ENCODE measurements at regions of chr13 and their contacts with region 1.

Region 1: GRCh38 chr13:48319531-48320398 is 16.2 kb downstream of the RB1 start:
- DNase-seq: no peak
- ATAC-seq: no peak
- H3K4me3 ChIP-seq: no peak overlapping the region
- H3K27ac ChIP-seq: no peak overlapping the region
- H3K4me1 ChIP-seq: no peaks in the 10 kb centered on the region
- H3K27me3 ChIP-seq: no peaks in the 10 kb centered on the region
- CTCF ChIP-seq: no peak

Region 2: GRCh38 chr13:48492470-48493065 is 172.8 kb after region 1 on chr13:
- intact Hi-C with region 1: loop called in 1 of 2 experiments (anchors 10 kb)
- DNase-seq: peak; percentile 76 to 81
- ATAC-seq: peak; percentile 48 to 80 (median 70)
- H3K4me3 ChIP-seq: peak overlapping the region; percentile 35
- H3K27ac ChIP-seq: peak overlapping the region; percentile 68
- H3K4me1 ChIP-seq: peaks cover 3% of the 10 kb centered on the region
- H3K27me3 ChIP-seq: no peaks in the 10 kb centered on the region
- CTCF ChIP-seq: no peak